ENCODE measurements at regions of chr17 and their contacts with region 1.

Region 1: GRCh38 chr17:4789901-4790704 is 1.3 kb downstream of the GLTPD2 start:
- DNase-seq: peak; percentile 89
- ATAC-seq: peak; percentile 88
- H3K4me3 Mint-ChIP-seq: peak overlapping the region; percentile 79
- H3K27ac Mint-ChIP-seq: peak overlapping the region; percentile 91
- H3K4me1 Mint-ChIP-seq: peaks cover 22% of the 10 kb centered on the region
- H3K27me3 Mint-ChIP-seq: peaks cover 34% of the 10 kb centered on the region
- CTCF ChIP-seq: peak; percentile 91

Region 2: DNA sequence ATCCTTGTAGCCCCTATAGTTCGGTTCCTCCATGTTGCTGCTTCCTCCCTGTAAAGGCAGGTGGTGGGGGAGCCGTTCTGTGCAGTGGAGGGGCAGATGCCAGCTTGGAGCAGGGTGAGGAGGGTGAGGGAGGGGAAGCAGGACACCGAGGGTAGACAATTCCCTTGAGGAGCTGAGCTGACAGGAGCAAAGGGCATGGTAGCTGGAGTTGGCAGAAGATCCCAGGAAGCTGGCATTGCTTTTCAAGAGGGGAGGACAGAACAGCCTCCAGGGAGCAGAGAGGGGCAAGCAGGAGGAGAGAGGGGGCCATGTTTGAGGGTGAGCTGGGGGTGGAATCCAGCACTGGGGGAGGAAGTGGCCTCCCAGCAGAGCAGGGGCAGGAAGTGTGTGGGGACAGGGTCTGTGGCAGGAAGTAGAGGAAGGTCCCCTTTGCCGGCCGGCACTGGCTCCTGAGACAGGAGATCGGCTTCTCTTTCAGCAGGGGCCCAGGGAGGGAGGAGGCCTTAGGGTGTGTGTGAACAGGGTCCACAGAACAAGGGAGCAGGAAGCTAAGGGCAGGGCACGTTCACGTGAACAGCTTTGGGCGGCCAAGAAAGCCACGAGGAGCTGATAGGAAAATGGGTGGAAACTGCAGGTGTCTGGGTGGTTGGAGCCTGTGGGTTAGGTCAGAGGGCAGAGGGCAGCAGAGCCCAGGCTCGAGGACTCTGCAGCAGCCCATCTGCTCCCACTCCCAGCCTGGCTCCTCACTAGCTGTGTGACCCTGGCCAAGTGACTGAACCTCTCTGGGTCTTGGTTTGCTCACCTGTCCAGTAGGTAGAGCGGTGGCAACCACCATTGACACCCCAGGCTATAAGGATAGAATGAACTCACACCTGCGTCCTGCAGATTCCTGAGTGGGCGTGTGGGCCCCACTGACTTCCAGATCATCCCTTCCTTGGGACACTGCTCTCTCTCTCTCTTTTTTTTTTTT is 308.9 kb before region 1 on chr17:
- CTCF ChIA-PET with region 1: no interaction called
- POLR2A ChIA-PET with region 1: no interaction called
- intact Hi-C with region 1: no loop called
- DNase-seq: peak; percentile 75
- ATAC-seq: peak; percentile 92
- H3K4me3 Mint-ChIP-seq: peak overlapping the region; percentile 72
- H3K27ac Mint-ChIP-seq: peak overlapping the region; percentile 98
- H3K4me1 Mint-ChIP-seq: peaks cover 53% of the 10 kb centered on the region
- H3K27me3 Mint-ChIP-seq: no peaks in the 10 kb centered on the region
- CTCF ChIP-seq: no peak

Region 3: DNA sequence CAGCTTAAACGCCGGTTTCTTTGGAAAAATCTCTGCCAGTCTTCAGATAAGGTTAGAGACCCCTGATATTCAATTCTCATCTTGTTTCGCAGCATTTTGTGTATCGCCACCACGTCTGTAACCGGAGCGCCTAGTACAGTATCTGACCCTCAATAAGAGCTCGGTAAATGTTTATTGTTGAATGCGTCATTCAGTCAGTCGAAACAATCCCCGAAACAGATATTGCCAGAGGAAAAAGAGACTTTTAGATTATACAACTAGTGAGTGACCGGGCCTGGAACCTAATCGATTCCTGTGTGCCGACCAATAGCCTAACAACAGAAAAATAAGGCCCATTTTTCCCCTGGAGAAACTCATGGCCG is 86.8 kb before region 1 on chr17:
- CTCF ChIA-PET with region 1: interaction called, 9 read pairs
- POLR2A ChIA-PET with region 1: interaction called, 11 read pairs
- intact Hi-C with region 1: no loop called
- DNase-seq: no peak
- ATAC-seq: no peak
- H3K4me3 Mint-ChIP-seq: peak overlapping the region; percentile 79
- H3K27ac Mint-ChIP-seq: peak overlapping the region; percentile 98
- H3K4me1 Mint-ChIP-seq: peaks cover 42% of the 10 kb centered on the region
- H3K27me3 Mint-ChIP-seq: no peaks in the 10 kb centered on the region
- CTCF ChIP-seq: no peak

Region 4: GRCh38 chr17:4733073-4733531 is 57.0 kb before region 1 on chr17:
- CTCF ChIA-PET with region 1: interaction called, 14 read pairs
- POLR2A ChIA-PET with region 1: interaction called, 5 read pairs
- intact Hi-C with region 1: no loop called
- DNase-seq: no peak
- ATAC-seq: no peak
- H3K4me3 Mint-ChIP-seq: no peak overlapping the region
- H3K27ac Mint-ChIP-seq: peak overlapping the region; percentile 28
- H3K4me1 Mint-ChIP-seq: peaks cover 31% of the 10 kb centered on the region
- H3K27me3 Mint-ChIP-seq: peaks cover 1% of the 10 kb centered on the region
- CTCF ChIP-seq: no peak

Region 5: DNA sequence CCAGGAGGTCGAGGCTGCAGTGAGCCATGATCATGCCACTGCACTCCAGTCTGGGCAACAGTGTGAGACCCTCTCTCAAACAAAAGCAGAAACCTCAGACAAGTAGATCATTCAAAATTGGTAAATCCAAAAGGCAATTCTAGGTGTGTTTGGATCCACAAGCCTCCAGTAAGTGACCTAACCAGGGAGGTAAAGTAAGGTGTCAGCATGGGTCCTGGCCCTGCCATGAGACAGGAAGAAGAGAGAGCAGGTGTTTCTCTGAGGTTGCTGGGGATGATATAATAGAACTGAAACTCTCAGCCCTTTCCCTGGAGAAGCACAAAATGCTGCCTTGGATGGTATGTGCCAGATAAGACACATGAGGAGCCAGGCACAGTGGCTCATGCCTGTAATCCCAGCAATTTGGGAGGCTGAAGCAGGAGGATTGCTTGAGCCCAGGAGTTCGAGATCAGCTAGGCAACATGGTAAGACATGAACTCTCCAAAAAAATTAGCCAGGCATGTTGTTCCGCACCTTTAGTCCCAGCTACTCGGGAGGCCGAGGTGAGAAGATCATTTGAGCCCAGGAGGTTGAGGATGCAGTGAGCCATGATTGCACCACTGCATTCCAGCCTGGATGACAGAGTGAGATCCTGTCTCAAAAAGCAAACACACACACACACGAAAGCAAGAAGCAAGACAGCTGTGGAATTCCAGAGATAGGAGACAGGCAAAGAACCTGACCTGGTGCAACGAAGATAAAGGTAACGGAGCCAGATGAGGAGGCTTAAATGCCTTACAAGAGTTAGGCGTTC is 11.9 kb before region 1 on chr17:
- CTCF ChIA-PET with region 1: interaction called, 11 read pairs
- POLR2A ChIA-PET with region 1: interaction called, 4 read pairs
- intact Hi-C with region 1: no loop called
- DNase-seq: no peak
- ATAC-seq: no peak
- H3K4me3 Mint-ChIP-seq: no peak overlapping the region
- H3K27ac Mint-ChIP-seq: no peak overlapping the region
- H3K4me1 Mint-ChIP-seq: no peaks in the 10 kb centered on the region
- H3K27me3 Mint-ChIP-seq: peaks cover 12% of the 10 kb centered on the region
- CTCF ChIP-seq: no peak

Region 6: DNA sequence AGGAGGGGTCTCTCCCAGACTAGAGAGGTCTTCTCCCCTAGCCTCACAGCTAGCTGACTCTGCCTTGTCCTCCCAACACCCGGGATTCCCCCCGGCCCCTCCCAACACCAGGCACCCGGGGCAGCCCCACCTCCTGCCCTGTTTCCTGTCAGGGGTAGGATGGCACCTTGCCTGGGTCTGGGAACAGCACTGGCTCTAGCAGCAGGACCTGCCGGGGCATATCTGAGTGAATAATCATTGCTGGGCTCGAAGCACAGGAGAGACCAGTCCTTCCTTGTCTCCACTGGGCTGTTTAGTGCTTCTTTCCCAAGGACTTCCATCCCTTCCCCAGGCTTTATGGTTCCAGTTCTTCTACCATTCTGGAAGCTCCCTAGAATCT is 68.8 kb after region 1 on chr17:
- CTCF ChIA-PET with region 1: no interaction called
- POLR2A ChIA-PET with region 1: no interaction called
- intact Hi-C with region 1: no loop called
- DNase-seq: no peak
- ATAC-seq: peak; percentile 42
- H3K4me3 Mint-ChIP-seq: no peak overlapping the region
- H3K27ac Mint-ChIP-seq: no peak overlapping the region
- H3K4me1 Mint-ChIP-seq: peaks cover 9% of the 10 kb centered on the region
- H3K27me3 Mint-ChIP-seq: no peaks in the 10 kb centered on the region
- CTCF ChIP-seq: no peak

Region 7: GRCh38 chr17:4870855-4871254 is 80.8 kb after region 1 on chr17:
- CTCF ChIA-PET with region 1: no interaction called
- POLR2A ChIA-PET with region 1: no interaction called
- intact Hi-C with region 1: no loop called
- DNase-seq: no peak
- ATAC-seq: no peak
- H3K4me3 Mint-ChIP-seq: no peak overlapping the region
- H3K27ac Mint-ChIP-seq: no peak overlapping the region
- H3K4me1 Mint-ChIP-seq: no peaks in the 10 kb centered on the region
- H3K27me3 Mint-ChIP-seq: no peaks in the 10 kb centered on the region
- CTCF ChIP-seq: no peak

Region 8: GRCh38 chr17:4881761-4882555 is 91.9 kb after region 1 on chr17:
- CTCF ChIA-PET with region 1: interaction called, 8 read pairs
- POLR2A ChIA-PET with region 1: no interaction called
- intact Hi-C with region 1: loop called (anchors 5 kb)
- DNase-seq: peak; percentile 79
- ATAC-seq: peak; percentile 94
- H3K4me3 Mint-ChIP-seq: no peak overlapping the region
- H3K27ac Mint-ChIP-seq: no peak overlapping the region
- H3K4me1 Mint-ChIP-seq: no peaks in the 10 kb centered on the region
- H3K27me3 Mint-ChIP-seq: no peaks in the 10 kb centered on the region
- CTCF ChIP-seq: peak; percentile 94

Region 9: DNA sequence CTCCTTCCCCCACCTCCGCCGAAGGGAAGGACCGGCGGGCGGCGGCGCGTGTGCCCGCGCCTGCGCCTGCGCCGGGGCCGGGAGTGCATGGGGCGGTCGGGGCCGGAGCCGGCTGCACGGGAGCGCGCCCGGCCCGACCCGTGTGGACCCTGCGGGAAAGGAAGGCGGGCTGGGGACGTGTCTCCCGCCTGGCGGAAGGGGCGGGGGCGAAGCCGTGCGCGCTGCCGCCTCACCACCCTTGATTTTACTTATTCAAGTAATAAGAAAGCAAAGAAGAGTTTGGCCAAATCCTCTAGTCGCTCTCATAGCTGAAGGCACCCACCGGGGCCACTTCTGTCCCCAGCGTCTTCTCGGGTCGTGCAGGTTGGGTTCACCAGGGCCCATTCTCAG is 158.8 kb after region 1 on chr17:
- CTCF ChIA-PET with region 1: no interaction called
- POLR2A ChIA-PET with region 1: no interaction called
- intact Hi-C with region 1: no loop called
- DNase-seq: peak; percentile 85
- ATAC-seq: peak; percentile 35
- H3K4me3 Mint-ChIP-seq: peak overlapping the region; percentile 97
- H3K27ac Mint-ChIP-seq: peak overlapping the region; percentile 99
- H3K4me1 Mint-ChIP-seq: peaks cover 32% of the 10 kb centered on the region
- H3K27me3 Mint-ChIP-seq: no peaks in the 10 kb centered on the region
- CTCF ChIP-seq: no peak